GM10248 (cell line): ENCODE measurements at regions of chr20 and their contacts with region 1.

Region 1: DNA sequence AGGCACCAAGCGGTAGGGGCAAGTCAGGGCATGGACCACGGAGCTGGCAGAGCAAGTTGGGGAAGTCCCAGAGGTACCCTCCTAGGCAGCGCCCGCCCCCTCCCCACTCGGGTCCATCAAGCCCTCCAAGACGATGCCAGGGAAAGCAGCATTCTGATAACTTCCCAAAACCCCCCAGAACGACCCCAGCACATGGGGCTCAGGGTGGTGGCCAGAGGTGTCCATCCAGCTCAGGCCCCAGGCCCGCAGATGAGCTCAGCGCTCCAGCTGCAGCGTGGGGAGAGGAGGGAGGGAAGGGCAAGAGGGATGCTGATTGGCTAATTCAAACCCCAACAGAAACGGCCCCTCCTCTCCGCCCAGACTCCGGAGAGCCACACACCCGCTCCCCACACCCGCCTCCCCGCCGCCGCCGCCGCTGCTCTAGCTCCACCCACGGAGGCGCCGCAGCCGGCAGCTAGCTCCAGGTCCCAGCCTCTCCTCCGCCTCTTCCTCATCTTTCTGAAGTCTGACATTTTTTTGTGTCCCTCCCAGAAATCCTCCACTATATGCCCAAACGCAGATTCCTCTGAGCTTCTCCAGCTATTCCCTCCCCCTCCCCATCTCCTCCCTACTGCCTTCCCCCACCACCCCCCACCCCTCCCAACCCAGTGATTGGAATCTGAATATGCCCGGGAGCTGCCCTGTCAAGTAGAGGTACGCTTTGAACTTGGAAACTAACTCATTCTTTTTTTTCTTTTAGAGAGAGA is 40.3 kb upstream of the TLDC2 start:
- DNase-seq: peak; percentile 97
- CTCF ChIP-seq: no peak

Region 2: GRCh38 chr20:36181934-36182603 is 653.6 kb before region 1 on chr20:
- CTCF ChIA-PET with region 1: no interaction called
- POLR2A ChIA-PET with region 1: no interaction called
- DNase-seq: no peak
- CTCF ChIP-seq: no peak

Region 3: GRCh38 chr20:36847009-36847709 is 11.5 kb after region 1 on chr20:
- CTCF ChIA-PET with region 1: interaction called, 61 read pairs
- POLR2A ChIA-PET with region 1: interaction called, 7 read pairs
- DNase-seq: no peak
- CTCF ChIP-seq: no peak

Region 4: DNA sequence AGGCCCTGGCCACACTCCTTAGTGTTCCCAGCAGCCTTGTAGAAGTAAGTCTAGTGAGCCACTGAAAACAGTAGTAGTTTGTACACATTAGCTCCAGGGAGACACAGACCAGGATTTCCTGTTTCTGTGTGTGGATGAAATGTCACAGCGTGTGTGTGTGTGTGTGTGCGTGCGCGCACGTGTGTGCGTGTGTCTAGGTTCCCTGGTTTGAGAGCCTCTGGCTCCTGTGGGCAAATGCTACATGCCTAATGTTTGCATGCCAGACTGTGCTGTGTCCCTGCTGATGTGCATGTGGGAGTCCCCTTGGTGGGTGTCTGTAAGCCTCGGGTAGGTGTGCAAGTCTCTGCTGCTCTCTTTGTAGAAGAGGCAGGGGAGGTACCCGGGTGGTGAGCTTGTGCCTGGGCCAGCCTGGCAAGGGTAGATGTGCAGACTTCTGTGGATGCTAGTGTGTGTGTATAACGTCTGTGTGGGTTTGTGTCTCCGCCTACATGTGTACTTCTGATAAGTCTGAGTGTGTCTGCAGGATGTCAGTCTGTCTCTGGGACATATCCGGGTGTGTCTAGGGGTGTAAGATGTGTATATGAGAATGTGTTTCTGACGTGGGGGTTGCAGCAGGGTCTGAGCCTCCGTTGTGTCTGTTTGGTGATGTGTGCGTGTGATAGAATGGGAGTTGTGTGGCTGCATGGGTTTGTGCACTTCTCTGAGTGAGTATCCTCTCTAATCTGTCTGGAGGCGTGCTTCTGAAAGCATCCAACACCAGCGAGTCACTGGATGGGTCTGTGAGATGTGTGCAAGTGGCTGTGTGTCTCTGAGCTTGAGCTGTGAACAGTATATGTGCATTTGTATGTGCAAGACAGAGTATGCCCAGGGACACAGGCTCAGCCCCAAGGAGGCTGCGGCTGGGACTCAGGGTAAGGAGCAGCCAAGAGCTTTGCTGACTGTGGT is 21.3 kb after region 1 on chr20:
- CTCF ChIA-PET with region 1: interaction called, 52 read pairs
- POLR2A ChIA-PET with region 1: interaction called, 4 read pairs
- DNase-seq: no peak
- CTCF ChIP-seq: no peak

Region 5: DNA sequence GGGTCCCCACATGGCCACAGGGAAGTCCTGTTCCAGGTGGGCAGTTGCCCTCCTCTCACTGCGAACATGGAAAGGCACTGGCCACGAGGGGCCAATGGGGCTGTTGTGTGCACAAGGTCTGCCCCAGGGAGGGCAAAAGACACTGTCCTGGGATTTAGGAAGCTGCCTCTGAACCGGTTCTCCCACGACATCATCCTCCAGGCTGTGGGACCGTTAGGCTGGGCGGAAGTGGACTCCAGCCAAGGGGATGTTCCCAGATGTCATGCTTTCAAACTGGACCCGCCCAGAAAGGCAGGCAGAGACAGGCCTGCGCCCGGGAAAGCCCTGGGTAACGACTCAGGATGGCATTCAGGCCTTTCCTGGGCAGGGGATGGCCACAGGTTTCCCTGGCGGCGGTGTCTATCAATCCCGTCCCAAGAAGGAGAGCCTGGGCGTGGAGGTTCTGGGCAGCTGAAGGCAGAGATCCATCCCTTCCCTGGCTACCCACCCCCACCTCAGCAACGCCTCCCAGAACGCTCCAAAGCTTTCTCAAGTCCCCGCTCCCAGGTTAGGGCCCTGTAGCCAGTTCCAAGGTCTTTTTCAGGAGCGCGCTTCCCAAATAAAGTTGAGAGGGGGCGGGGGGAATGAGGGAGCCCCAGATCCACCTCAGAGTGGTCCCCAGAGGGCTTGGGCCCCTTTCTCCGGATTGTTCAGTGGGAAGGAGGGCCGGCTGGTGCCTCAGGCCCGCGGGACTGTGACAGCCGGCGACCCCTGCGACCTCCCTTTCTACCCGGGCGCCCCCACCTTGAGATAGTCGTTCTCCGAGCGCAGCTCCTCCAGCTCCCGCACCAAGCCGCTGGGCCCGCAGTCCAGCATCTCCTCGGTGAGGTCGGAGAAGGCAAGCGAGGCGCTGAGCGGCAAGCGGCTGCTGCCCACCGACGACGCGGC is 26.5 kb after region 1 on chr20:
- CTCF ChIA-PET with region 1: interaction called, 52 read pairs
- POLR2A ChIA-PET with region 1: no interaction called
- DNase-seq: no peak
- CTCF ChIP-seq: no peak